ENCODE measurements at regions of chr22 and their contacts with region 1.

Region 1: DNA sequence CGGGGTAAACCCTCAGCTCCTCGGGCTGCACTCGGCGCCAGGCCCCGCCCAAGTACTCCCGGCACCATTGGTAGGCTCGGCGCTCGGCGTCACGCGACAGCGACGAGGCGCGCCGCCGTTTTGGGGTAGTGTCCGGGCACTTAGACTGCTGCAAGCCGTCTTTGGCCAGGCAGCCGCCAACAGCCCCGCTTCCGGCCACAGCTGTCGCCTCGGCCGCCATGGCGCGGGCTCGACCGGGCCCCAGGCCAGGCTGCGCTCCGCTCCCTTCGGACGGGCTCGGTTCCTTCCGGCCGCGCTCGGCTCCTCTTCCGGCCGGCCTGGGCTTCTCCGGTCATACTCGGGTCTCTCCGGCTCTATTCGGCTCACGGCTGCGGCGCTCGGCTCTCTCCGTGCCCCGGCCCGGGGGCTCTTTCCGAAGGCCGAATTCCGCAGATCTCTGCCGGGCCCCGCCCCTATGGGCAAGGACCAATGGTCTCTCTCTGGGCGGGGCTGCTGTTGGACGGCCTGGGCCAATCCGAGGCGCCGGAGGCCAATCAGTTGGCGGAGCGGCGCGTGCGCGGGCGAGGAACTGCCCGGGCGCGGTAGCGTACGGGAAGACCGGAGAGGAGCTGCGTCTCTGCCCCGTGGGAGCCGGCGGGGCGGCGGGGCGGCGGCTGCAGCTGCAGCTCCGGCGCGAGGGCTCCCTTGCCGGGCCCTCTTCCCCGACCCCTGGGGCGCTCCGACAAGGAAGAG is at the start of gene CHKB:
- DNase-seq: peak; percentile 100
- H3K4me3 Mint-ChIP-seq: peak within 1 kb of the TSS; percentile 94
- H3K27ac Mint-ChIP-seq: peak within 1 kb of the TSS; percentile 96
- H3K4me1 Mint-ChIP-seq: peaks cover 22% of the 10 kb centered on the region
- H3K27me3 Mint-ChIP-seq: no peaks in the 10 kb centered on the region
- total RNA-seq, gene CHKB: 81.0 and 88.7 TPM in 2 replicates

Region 2: GRCh38 chr22:50343541-50343935 is 239.2 kb before region 1 on chr22:
- intact Hi-C with region 1: no loop called
- DNase-seq: no peak
- H3K4me3 Mint-ChIP-seq: peak overlapping the region; percentile 56
- H3K27ac Mint-ChIP-seq: no peak overlapping the region
- H3K4me1 Mint-ChIP-seq: peaks cover 11% of the 10 kb centered on the region
- H3K27me3 Mint-ChIP-seq: peaks cover 2% of the 10 kb centered on the region

Region 3: DNA sequence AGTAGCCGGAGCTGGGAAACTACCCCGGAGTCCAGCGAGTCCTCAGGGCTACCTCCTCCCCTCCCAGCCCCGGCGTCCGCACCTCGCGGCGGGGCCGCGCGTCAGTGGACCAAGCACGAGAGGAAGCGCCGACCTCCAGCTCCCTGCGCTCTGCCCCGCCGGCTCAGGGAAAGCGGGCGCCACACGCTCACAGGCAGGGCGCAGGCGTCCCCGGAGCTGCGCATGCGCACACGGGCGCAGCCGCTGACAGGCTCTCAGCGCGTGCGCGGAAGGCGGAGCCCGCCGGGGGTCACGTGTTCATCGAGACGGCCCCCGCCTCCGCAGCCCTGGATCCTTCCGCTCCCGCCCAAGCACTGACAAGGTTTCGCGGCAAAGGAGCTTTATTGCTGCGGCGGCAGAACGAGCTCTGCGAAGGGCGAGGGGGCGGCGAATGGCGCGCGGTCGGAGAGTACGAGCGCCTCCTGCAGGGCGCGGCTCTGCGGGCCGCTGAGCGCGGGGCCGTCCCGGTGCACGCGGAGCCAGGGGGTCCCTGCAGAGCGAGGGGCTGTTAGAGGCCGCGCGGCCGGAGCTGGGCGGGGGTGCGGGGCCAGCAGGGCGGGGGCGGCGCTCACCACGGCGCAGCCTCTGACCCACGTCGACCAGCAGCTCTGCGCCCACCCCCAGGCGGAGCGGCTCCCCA is 57.2 kb before region 1 on chr22 and contains the start of gene SCO2:
- intact Hi-C with region 1: loop called (anchors 1 kb)
- DNase-seq: peak; percentile 97
- H3K4me3 Mint-ChIP-seq: peak within 1 kb of the TSS; percentile 94
- H3K27ac Mint-ChIP-seq: peak within 1 kb of the TSS; percentile 88
- H3K4me1 Mint-ChIP-seq: peaks cover 34% of the 10 kb centered on the region
- H3K27me3 Mint-ChIP-seq: no peaks in the 10 kb centered on the region
- total RNA-seq, gene SCO2: 8.7 and 14.8 TPM in 2 replicates

Region 4: GRCh38 chr22:50544078-50544745 is 38.5 kb before region 1 on chr22:
- intact Hi-C with region 1: loop called (anchors 1 kb)
- DNase-seq: peak; percentile 80
- H3K4me3 Mint-ChIP-seq: peak overlapping the region; percentile 59
- H3K27ac Mint-ChIP-seq: peak overlapping the region; percentile 84
- H3K4me1 Mint-ChIP-seq: peaks cover 51% of the 10 kb centered on the region
- H3K27me3 Mint-ChIP-seq: no peaks in the 10 kb centered on the region

Region 5: DNA sequence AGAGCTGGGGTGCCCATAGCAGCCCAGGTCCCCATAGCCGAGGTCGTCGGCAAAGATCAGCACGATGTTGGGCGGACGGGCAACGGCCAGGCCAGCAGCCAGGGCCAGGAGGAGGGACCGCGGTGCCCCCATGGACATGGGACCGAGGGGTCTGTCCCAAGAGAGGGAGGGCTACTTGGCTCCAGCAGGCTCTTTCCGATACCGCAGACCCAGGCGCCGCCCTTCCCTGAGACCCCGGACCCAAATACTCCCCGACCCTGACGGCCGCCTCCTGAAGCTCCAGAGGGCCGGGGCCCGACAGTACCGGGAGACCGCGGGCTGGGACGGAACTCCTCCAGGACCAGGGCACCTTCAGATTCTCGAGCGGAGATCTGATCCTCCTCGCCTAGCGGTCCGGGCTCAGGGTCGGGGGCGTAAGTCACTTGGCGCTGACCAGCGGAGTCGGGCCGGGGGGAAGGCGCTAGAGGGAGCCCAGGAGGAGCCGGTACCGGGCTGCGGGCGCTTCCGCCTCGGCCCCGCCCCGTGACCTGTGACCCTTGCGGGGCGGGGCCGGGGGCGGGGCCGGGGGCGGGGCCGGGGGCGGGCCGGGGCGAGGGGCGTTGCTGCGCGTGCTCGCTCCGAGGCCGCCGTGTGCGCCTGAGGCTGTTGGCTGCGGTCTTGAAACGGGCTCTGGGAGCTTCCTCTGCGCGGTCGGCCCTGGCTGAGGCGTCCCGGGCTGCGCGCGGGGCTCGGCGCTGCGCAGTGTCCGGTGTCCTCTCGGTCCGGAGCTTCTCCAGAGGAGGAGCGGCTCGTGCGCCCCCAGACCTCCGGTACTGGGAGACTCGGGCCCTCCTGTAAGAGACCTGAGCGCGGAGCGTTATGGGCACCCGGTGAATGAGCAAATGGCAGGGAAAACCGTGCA is 45.2 kb after region 1 on chr22 and contains the start of gene ARSA:
- intact Hi-C with region 1: loop called (anchors 2 kb)
- DNase-seq: peak; percentile 78
- H3K4me3 Mint-ChIP-seq: peak within 1 kb of the TSS; percentile 91
- H3K27ac Mint-ChIP-seq: peak within 1 kb of the TSS; percentile 52
- H3K4me1 Mint-ChIP-seq: peaks cover 16% of the 10 kb centered on the region
- H3K27me3 Mint-ChIP-seq: peaks cover 2% of the 10 kb centered on the region
- total RNA-seq, gene ARSA: 26.2 and 27.3 TPM in 2 replicates

Region 6: DNA sequence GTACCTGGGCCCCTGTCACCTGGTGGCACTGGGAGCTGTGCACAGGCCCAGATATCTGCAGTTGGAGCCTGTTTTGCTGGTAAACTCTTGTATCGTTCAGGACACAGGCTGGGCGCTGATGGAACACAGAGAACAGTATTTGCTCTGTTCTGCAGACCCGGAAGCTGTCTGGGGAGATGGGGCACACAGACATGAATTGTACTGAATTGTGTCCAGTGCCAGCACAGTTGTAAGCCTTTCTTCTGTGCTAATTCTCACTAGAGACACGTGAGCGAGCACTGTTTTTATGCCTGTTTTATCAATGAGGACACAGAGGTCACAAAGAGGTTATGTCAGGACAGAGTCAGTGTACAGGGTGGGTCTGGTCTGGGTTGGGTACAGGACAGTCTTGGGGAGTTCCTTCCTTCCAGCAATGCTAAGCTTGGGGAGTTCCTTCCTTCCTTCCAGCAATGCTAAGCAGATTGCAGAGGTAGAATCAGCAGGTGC is 130.9 kb after region 1 on chr22:
- intact Hi-C with region 1: no loop called
- DNase-seq: no peak
- H3K4me3 Mint-ChIP-seq: no peak overlapping the region
- H3K27ac Mint-ChIP-seq: no peak overlapping the region
- H3K4me1 Mint-ChIP-seq: no peaks in the 10 kb centered on the region
- H3K27me3 Mint-ChIP-seq: no peaks in the 10 kb centered on the region

Measured in activated T-helper 1 cell treated with anti-CD3 and anti-CD28 coated beads, Interleukin-12 subunit alpha, Interleukin-12 subunit beta, Interleukin-2, Interleukin-4 antibody, amounts not matched to agents 30 ng/mL and 10 ng/mL and 1 ng/mL, durations not matched to agents 14 hours and 24 hours and 36 hours (primary cell).